Posterior cingulate gyrus (tissue), 11 donors: ENCODE measurements at regions of chr2 and their contacts with region 1.

Region 1: DNA sequence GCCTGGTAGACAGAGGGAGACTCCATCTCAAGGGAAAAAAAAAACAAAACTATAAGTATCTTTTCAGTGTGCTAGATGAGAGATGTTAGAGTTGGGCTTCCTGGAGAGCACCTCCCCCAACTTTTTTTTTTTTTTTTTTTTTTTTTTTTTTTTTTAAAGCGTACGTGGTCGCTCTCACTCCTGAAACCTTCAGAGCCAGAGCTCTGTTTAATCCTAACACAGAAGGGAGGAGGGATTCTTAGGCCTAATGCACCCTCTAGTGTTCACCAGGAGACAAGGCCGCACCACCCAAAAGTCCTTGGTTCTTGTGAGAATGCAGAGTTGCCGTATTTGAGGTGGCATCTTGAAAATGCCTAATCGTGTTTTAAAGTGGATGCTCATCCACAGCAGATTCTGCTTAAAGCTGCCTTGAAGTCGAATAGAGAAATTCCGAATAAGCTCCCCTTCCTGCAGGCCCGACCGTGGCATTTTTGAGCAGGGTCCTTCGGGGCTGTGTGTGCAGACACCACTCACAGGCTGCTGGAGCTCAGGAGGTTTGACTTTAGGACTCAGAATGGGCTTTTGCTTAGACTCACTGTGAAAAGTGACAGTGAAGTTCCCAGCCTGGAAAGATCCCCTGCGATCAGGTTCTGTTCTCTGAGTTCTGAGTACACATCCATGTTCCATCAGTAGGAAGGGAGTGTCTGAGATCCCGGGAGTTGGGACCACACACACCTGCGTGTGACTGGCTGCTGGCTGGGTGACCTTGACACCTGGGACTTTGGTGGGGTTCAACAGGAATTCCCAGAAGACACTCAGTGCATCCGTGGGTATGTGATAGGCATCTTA is 252.6 kb downstream of the AGAP1 start:
- DNase-seq: peak in 7 of 10 donors; percentile 56 to 93 (median 74)

Region 2: DNA sequence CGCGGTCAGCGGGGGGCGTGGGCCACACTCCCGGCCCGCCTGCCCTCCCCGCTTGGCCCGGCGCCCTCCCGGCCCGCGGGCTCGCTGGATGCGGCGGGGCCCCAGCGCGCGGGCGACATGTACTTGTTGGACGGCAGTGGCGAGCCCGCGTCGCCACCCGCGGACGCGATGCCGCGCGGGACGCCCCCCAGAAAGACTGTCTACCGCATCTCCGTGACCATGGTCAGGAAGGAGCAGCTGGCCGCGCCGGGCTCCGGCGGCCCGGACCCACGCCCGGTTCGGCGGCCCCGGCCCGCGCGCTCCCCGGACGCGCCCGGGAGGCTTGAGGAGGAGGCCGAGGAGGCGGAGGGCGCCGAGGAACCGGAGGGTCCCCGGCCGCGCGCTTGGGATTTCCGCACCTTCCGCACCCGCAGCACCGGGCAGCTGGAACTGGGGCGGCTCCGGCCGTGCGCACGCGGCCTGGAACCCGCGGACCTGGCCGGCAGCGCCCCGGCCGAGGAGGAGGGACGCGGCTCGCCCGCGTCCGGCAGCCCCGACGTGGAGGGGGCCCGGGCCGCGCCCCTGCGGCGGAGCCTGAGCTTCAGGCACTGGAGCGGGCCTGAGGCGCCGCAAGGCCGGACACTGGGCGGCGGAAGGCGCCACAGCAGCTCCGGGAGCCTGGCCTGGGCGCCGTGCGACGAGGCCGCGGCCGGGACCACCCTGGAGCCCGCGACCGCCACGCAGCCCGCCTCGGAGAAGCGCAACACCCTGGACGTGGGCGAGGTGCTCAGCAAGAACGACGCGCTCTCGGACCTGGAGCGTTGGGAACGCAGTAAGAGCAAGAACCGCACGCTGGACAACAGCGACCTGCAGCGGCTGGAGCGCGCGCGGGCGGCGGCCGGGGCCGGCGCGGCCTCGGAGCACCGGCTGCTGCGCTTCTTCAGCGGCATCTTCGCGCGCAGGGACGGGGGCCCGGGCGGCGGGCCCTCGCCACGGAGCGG is 76.2 kb before region 1 on chr2:
- intact Hi-C with region 1: loop called (anchors 5 kb)
- DNase-seq: peak; percentile 49 to 96 (median 70)

Region 3: DNA sequence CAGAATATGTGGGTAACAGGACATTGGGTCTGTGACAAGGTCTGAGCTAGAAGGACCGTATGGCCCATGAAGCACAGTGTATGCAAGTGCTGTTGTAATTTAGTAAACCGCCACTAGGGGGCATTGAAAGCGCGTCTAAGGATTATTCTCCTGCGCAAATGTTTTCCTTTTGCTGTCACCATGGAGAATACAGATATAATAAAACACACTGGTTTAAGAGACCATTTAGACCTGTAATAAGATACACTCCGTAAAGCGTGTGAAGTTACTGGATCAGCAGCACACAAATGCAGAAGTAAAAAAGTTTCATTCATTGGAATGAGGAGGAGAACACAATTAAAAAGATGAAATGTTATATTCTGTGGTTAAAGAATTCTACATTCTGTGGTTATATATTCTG is 19.8 kb after region 1 on chr2:
- intact Hi-C with region 1: no loop called
- DNase-seq: peak in 5 of 10 donors; percentile 47 to 87 (median 60)